ENCODE measurements at regions of chr19 and their contacts with region 1.

Region 1: DNA sequence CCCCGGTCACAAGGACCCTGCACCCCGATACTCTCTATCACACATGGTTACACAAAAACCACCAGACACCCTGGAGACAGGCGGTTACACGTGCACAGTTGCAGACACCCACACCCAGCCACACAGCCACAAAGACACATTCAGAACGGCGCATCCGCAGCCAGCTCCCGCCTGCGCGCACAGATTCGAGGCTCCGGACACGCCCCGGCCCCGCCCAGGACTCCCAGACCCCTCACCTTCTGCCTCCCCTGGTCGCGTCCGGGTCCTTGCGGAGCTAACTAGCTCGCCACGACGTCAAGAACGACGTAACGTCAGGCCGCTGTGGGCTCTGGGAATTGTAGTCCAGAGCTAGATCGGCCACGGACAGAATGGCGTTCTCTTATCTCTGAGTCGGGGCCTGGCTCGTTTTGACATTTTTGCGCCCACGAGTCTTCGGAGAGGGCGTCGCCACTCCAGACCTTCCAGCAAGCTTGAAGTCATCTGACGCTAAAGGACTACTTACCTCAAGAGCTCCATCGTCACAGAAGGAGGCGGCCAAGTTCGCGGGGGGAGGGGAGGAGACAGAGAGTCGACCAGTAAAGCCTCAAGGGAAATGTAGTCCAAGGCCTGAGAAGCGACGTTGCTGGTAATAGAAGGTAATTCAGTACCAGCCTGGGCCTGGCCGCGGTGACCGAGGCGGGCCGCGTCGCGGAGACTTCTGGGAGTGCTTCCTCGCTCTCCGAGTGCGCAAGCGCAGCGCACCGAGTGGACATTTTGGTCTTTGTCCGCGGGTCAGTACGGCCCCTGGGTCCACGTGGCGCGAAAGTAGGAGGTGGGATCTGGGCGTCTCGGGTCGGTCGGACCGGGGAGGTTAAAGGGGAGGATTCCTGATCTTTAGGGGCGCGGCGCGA is at the starts of genes ZNF146 and ZNF565:
- DNase-seq: peak; percentile 95
- H3K4me3 Mint-ChIP-seq: no peak within 1 kb of the TSS
- H3K27ac Mint-ChIP-seq: no peak within 1 kb of the TSS
- H3K4me1 Mint-ChIP-seq: peaks cover 3% of the 10 kb centered on the region
- H3K27me3 Mint-ChIP-seq: no peaks in the 10 kb centered on the region
- total RNA-seq, gene ZNF146: 82.3 and 86.4 TPM in 2 replicates
- total RNA-seq, gene ZNF565: 1.5 and 2.4 TPM in 2 replicates

Region 2: GRCh38 chr19:36114763-36115452 is 99.7 kb before region 1 on chr19 and contains the start of gene POLR2I:
- intact Hi-C with region 1: loop called (anchors 1 kb)
- DNase-seq: peak; percentile 99
- H3K4me3 Mint-ChIP-seq: peak within 1 kb of the TSS; percentile 90
- H3K27ac Mint-ChIP-seq: peak within 1 kb of the TSS; percentile 89
- H3K4me1 Mint-ChIP-seq: peaks cover 21% of the 10 kb centered on the region
- H3K27me3 Mint-ChIP-seq: no peaks in the 10 kb centered on the region
- total RNA-seq, gene POLR2I: 68.9 and 75.3 TPM in 2 replicates

Region 3: GRCh38 chr19:36139473-36140303 is 74.9 kb before region 1 on chr19 and contains the start of gene CAPNS1:
- intact Hi-C with region 1: loop called (anchors 1 kb)
- DNase-seq: peak; percentile 91
- H3K4me3 Mint-ChIP-seq: peak within 1 kb of the TSS; percentile 94
- H3K27ac Mint-ChIP-seq: peak within 1 kb of the TSS; percentile 95
- H3K4me1 Mint-ChIP-seq: peaks cover 16% of the 10 kb centered on the region
- H3K27me3 Mint-ChIP-seq: no peaks in the 10 kb centered on the region
- total RNA-seq, gene CAPNS1: 424 and 431 TPM in 2 replicates

Region 4: GRCh38 chr19:36528194-36528920 is 313.7 kb after region 1 on chr19 and contains the start of gene ZNF260:
- intact Hi-C with region 1: loop called (anchors 1 kb)
- DNase-seq: peak; percentile 87
- H3K4me3 Mint-ChIP-seq: peak within 1 kb of the TSS; percentile 96
- H3K27ac Mint-ChIP-seq: peak within 1 kb of the TSS; percentile 94
- H3K4me1 Mint-ChIP-seq: peaks cover 17% of the 10 kb centered on the region
- H3K27me3 Mint-ChIP-seq: no peaks in the 10 kb centered on the region
- total RNA-seq, gene ZNF260: 6.2 and 7.1 TPM in 2 replicates

Region 5: GRCh38 chr19:36772311-36773222 is 557.9 kb after region 1 on chr19 and contains the start of gene ZNF850:
- intact Hi-C with region 1: loop called (anchors 1 kb)
- DNase-seq: peak; percentile 91
- H3K4me3 Mint-ChIP-seq: peak within 1 kb of the TSS; percentile 95
- H3K27ac Mint-ChIP-seq: peak within 1 kb of the TSS; percentile 90
- H3K4me1 Mint-ChIP-seq: peaks cover 20% of the 10 kb centered on the region
- H3K27me3 Mint-ChIP-seq: no peaks in the 10 kb centered on the region
- total RNA-seq, gene ZNF850: 3.3 and 4.7 TPM in 2 replicates

Measured in activated T-helper 2 cell treated with anti-CD3 and anti-CD28 coated beads, Interferon-gamma antibody, Interleukin-2, Interleukin-4, amounts not matched to agents 10 μg/mL and 5 μg/mL and 100 μg/mL, durations not matched to agents 14 hours and 24 hours and 36 hours (primary cell).